ENCODE measurements at regions of chr5 and their contacts with region 1.

Region 1: DNA sequence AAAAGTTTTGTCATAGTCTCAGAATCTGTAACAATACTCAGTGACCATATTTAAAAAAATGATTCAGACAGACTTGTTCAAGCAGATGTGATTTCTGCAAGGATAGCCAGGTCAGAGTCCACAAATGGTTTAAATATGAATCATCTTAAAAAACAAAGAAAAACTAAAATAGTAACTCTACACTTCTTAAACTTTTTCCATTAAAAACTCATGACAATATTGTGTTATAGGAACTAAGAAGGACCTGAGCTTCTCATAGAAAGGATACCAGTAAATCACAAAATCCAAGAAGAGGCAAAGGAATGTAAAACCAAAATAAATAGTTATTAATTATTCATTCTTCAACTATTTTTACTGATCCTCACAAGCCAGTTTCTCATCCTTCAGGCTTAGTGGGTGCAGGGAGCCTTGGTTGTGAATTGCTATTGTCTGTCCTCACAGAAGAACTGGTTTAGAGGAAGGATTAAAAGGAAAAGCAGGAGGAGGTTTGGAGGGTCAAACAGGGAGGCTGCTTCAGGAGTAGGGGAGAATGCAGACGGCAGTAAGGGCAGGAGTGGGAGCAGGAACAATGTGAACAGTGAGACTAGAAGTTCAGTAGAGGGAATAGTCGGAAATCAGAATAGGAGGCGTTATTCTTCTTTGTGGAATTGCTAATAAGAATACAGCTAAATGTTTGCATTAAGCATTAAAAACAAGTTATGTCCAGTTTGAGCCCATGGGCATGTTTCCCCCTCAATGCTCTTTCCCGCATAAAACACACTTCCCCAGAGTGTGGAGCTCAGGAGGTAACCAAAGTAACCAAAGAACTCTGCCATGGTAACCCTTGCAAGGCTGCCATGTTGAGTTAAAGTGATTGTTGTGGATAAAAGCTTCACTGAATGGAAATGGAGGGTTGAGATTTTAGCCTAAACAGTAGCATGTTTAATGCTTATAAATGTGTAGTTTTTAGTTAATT is 110.7 kb downstream of the CCDC192 start:
- DNase-seq: no peak
- ATAC-seq: peak; percentile 56
- H3K4me3 ChIP-seq: no peak overlapping the region
- H3K27ac ChIP-seq: no peak overlapping the region
- H3K4me1 ChIP-seq: no peaks in the 10 kb centered on the region
- H3K27me3 ChIP-seq: peaks cover 0 to 2% of the 10 kb centered on the region in 2 experiments; a peak in 1 of 4 replicates
- CTCF ChIP-seq: no peak
- EP300 ChIP-seq: no peak
- POLR2A ChIP-seq: no peak
- RAD21 ChIP-seq: no peak

Region 2: DNA sequence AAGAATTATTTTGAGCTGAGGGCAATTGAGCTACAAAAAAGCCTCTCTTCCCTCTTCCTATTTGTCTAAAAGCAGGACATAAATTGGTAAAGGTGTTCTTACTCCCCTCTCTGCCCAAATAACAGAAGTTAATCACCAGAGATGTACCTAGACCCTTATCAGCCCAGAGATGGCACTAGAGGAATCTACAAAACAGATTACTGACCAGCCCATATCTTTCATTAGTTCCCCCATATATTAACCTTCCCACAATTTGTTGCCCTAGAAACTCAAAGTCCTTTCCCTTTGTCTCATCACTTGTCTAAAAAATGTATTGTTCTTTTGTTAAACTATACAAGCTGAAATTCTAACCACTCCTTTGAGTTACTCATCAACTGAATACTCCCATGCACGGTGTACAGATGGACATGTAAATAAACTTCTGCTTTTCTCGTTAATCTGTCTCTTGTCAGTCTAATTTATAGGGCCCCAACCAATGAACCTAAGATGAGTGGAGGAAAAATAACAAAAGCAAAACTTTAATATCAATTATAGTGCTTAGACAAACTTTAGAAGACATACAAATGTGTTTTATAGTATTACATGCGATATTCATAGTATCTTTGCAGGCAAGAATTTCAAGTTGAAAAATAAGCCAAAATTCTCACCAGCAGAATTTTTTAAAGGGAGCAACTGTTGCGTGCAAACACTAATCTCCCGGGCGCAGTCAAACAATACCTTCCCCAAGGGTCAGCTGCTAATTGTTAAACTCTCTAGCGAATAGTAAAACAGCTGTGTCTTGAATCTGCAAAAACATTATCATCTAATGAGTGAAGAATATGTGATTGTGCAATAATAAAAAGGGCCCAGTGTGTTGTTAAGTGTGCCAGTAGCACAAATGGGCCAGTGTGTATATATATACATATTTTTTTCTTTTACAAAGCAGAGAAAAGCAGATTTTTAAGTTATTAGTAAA is 20.4 kb after region 1 on chr5:
- CTCF ChIA-PET with region 1: interaction called, 4 read pairs
- POLR2A ChIA-PET with region 1: interaction called, 3 read pairs
- RAD21 ChIA-PET with region 1: no interaction called
- SMC1A ChIA-PET with region 1: interaction called, 13 read pairs
- in situ Hi-C with region 1: no loop called
- intact Hi-C with region 1: no loop called
- DNase-seq: no peak
- ATAC-seq: peak; percentile 65
- H3K4me3 ChIP-seq: no peak overlapping the region
- H3K27ac ChIP-seq: no peak overlapping the region
- H3K4me1 ChIP-seq: no peaks in the 10 kb centered on the region
- H3K27me3 ChIP-seq: no peaks in the 10 kb centered on the region
- CTCF ChIP-seq: no peak; a peak in 1 of 6 replicates
- EP300 ChIP-seq: no peak
- POLR2A ChIP-seq: no peak
- RAD21 ChIP-seq: 0 out of 2 replicates have a peak, but pooled peaks have one; percentile 10

Measured in GM12878 (cell line).